PC-3 (cell line): ENCODE measurements at regions of chr1 and their contacts with region 1.

Region 1: DNA sequence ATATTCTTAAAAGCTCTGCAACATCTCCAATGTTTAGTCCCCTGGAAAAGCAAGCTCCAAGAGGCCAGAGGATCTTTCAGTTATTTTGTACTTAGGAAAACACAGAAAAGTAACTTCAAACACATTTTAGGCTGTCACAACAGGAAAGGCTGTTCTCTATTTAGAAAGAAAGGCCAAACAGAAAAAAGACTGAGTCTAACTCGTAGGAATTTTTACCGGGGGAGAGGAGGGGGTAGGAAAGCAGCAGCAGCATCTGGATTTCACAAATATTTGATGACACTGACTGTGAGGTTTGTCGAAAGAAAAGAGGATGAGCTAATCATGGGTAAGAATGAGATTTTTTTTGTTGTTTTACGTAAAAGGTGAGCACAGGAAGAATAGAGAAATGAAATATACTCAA is 107.1 kb downstream of the EIF4G3 start:
- DNase-seq: no peak
- ATAC-seq: no peak
- H3K4me3 ChIP-seq: no peak overlapping the region
- H3K27ac ChIP-seq: no peak overlapping the region
- H3K4me1 ChIP-seq: peaks cover 9% of the 10 kb centered on the region
- H3K27me3 ChIP-seq: no peaks in the 10 kb centered on the region
- CTCF ChIP-seq: no peak

Region 2: GRCh38 chr1:21082073-21082472 is 12.5 kb after region 1 on chr1:
- CTCF ChIA-PET with region 1: no interaction called
- POLR2A ChIA-PET with region 1: interaction called, 13 read pairs
- intact Hi-C with region 1: no loop called
- DNase-seq: no peak
- ATAC-seq: no peak
- H3K4me3 ChIP-seq: no peak overlapping the region
- H3K27ac ChIP-seq: no peak overlapping the region
- H3K4me1 ChIP-seq: peaks cover 3% of the 10 kb centered on the region; the same call in 1 of the 2 replicates
- H3K27me3 ChIP-seq: no peaks in the 10 kb centered on the region
- CTCF ChIP-seq: no peak

Region 3: DNA sequence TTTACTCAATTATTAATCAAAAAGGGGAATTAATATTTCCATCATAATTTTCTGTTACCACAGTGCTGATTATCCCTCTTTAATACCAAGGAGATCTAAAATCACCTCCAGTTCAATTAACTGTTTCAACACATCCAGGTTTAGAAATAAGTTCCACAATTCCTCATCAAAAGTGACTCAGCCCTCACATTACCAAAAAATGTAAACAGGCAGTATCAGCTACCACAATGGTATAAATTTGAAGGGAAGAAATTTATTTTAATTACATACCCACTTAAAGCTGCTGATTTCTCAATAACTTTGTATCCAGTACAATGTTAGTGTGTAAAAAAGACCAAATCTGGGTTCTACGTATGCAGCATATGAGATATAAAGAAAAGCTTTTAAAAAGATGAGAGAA is 55.3 kb after region 1 on chr1:
- CTCF ChIA-PET with region 1: no interaction called
- POLR2A ChIA-PET with region 1: no interaction called
- intact Hi-C with region 1: loop called (anchors 10 kb)
- DNase-seq: no peak
- ATAC-seq: no peak
- H3K4me3 ChIP-seq: no peak overlapping the region
- H3K27ac ChIP-seq: no peak overlapping the region
- H3K4me1 ChIP-seq: no peaks in the 10 kb centered on the region
- H3K27me3 ChIP-seq: no peaks in the 10 kb centered on the region
- CTCF ChIP-seq: no peak